K562 (cell line): ENCODE measurements at regions of chr19 and their contacts with region 1.

Region 1: DNA sequence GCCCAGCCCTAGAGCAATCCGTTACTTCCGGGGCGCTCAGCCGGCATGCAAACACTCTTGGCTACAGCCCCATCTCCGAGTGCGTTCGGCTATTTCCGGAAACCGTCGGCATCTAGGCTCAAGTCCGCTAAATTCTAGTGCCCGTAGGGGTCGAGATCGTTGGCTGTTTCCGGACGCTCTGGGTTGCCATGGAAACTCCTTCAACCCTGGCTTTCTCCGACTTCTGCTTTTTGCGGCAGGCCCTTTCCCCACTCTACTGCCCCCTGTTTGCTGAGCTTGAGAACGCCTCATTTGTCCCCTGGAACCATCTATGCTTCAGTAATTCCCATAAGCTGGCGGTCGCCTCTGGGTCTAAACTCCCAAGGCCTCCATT is 533 bp upstream of the PIK3R2 start:
- DNase-seq: peak; percentile 91 to 99 (median 94)
- ATAC-seq: peak; percentile 75
- H3K4me3 ChIP-seq: peak overlapping the region; percentile 82
- H3K27ac ChIP-seq: peak overlapping the region; percentile 89
- H3K4me1 ChIP-seq: peaks cover 28 to 61% of the 10 kb centered on the region in 2 experiments
- H3K27me3 ChIP-seq: no peaks in the 10 kb centered on the region
- CTCF ChIP-seq: peak; percentile 74 to 92 (median 86)
- EP300 ChIP-seq: no peak
- POLR2A ChIP-seq: no peak; the same call in 1 of the 2 replicates
- RAD21 ChIP-seq: peak; percentile 44 to 50

Region 2: DNA sequence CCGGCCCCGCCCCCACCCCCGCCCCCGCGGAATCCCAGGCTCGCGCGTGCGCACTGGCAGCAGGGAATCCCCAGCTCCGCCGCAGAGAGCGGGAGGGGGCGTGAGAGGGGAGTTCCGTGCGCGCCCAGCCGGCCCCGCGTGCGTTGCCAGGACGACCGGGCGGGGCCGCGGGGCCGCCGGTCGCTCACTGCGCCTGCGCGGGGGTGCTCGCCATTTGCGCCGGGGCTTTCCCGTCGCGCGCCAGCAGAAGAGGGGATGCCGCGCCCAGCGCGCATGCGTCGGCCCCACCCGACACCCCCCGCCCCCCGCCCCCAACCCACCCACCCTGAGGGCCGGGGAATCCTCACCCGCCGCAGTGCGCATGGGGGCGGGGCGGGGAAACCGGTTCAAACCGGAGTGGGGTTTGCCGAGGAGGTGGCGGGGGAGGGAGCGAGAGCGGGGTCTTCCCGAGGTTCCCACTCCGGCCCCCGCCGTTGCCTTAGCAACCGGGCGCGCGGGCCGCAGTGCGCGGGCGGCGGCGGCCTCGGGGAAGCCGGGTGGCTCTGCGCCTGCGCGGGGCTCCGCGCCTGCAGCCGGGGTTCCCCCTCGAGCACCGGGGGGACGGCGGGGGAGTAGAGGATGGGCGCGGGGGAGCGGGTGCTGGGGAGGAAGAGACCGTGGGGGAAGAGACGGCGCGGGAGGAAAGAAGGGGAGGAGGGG is 204.5 kb before region 1 on chr19:
- CTCF ChIA-PET with region 1: no interaction called
- POLR2A ChIA-PET with region 1: no interaction called
- in situ Hi-C with region 1: no loop called
- intact Hi-C with region 1: loop called (anchors 10 kb)
- DNase-seq: peak; percentile 96 to 99 (median 96)
- ATAC-seq: peak; percentile 68
- H3K4me3 ChIP-seq: peak overlapping the region; percentile 51
- H3K27ac ChIP-seq: peak overlapping the region; percentile 31; the same call in 1 of the 3 replicates
- H3K4me1 ChIP-seq: peaks cover 58 to 80% of the 10 kb centered on the region in 2 experiments
- H3K27me3 ChIP-seq: no peaks in the 10 kb centered on the region
- CTCF ChIP-seq: no peak
- EP300 ChIP-seq: no peak
- POLR2A ChIP-seq: no peak
- RAD21 ChIP-seq: no peak

Region 3: GRCh38 chr19:17966550-17967256 is 185.7 kb before region 1 on chr19 and contains the start of gene KCNN1:
- CTCF ChIA-PET with region 1: no interaction called
- POLR2A ChIA-PET with region 1: no interaction called
- in situ Hi-C with region 1: no loop called
- intact Hi-C with region 1: no loop called
- DNase-seq: peak in 3 of 4 experiments; percentile 92 to 99 (median 99)
- ATAC-seq: peak; percentile 74
- H3K4me3 ChIP-seq: peak within 1 kb of the TSS; percentile 36
- H3K27ac ChIP-seq: no peak within 1 kb of the TSS
- H3K4me1 ChIP-seq: peaks cover 12 to 47% of the 10 kb centered on the region in 2 experiments
- H3K27me3 ChIP-seq: no peaks in the 10 kb centered on the region
- CTCF ChIP-seq: no peak
- EP300 ChIP-seq: no peak
- POLR2A ChIP-seq: no peak
- RAD21 ChIP-seq: no peak
- polyA plus RNA-seq, gene KCNN1: 0.01 to 0.04 TPM

Region 4: GRCh38 chr19:18063463-18063862 is 89.0 kb before region 1 on chr19:
- CTCF ChIA-PET with region 1: interaction called, 5 read pairs
- POLR2A ChIA-PET with region 1: no interaction called
- in situ Hi-C with region 1: no loop called
- intact Hi-C with region 1: loop called (anchors 10 kb)
- DNase-seq: peak; percentile 35 to 65 (median 40)
- ATAC-seq: 0 out of 3 replicates have a peak, but pooled peaks have one; percentile 20
- H3K4me3 ChIP-seq: no peak overlapping the region
- H3K27ac ChIP-seq: no peak overlapping the region
- H3K4me1 ChIP-seq: peaks cover 8 to 22% of the 10 kb centered on the region in 2 experiments; a peak in 4 of 5 replicates
- H3K27me3 ChIP-seq: no peaks in the 10 kb centered on the region
- CTCF ChIP-seq: peak; percentile 64 to 73 (median 71)
- EP300 ChIP-seq: no peak
- POLR2A ChIP-seq: no peak
- RAD21 ChIP-seq: peak; percentile 58 to 69

Region 5: DNA sequence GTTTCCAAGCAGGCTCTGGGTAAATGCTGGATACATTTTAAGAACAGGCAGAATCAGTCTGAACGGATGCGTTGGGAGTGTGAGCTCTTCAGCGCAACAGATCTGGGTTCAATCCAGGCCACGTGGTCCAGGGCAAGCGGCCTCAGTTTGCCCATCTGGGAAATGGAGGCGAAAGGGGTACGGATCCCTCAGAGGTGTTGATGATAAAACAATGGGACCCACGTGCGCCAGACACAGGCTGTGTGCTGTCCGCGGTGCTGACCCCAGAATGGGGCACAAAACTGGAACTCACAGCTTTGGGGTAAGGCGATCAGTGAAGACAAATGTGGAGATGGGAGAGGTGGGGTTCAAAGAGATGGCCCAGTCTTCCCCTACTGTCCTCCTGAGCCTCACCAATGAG is 86.9 kb after region 1 on chr19:
- CTCF ChIA-PET with region 1: no interaction called
- POLR2A ChIA-PET with region 1: no interaction called
- in situ Hi-C with region 1: no loop called
- intact Hi-C with region 1: no loop called
- DNase-seq: peak in 2 of 4 experiments; percentile 52 to 59
- ATAC-seq: peak; percentile 55
- H3K4me3 ChIP-seq: no peak overlapping the region
- H3K27ac ChIP-seq: no peak overlapping the region
- H3K4me1 ChIP-seq: no peaks in the 10 kb centered on the region; a peak in 1 of 5 replicates
- H3K27me3 ChIP-seq: peaks cover 5 to 32% of the 10 kb centered on the region in 2 experiments; a peak in 3 of 5 replicates
- CTCF ChIP-seq: no peak
- EP300 ChIP-seq: no peak
- POLR2A ChIP-seq: no peak
- RAD21 ChIP-seq: no peak